CD4-positive, alpha-beta memory T cell (primary cell): ENCODE measurements at regions of chr7 and their contacts with region 1.

Region 1: GRCh38 chr7:28096713-28097112 is 83.9 kb downstream of the JAZF1 start:
- DNase-seq: peak in 4 of 5 donors; percentile 46 to 54 (median 50)
- H3K4me3 ChIP-seq: no peak overlapping the region
- H3K4me3 Mint-ChIP-seq: no peak overlapping the region
- H3K27ac ChIP-seq: no peak overlapping the region
- H3K27ac Mint-ChIP-seq: no peak overlapping the region
- H3K4me1 ChIP-seq: no peaks in the 10 kb centered on the region
- H3K4me1 Mint-ChIP-seq: peaks cover 0 to 10% (median 6%) of the 10 kb centered on the region in 4 donors
- H3K27me3 ChIP-seq: no peaks in the 10 kb centered on the region
- H3K27me3 Mint-ChIP-seq: no peaks in the 10 kb centered on the region

Region 2: DNA sequence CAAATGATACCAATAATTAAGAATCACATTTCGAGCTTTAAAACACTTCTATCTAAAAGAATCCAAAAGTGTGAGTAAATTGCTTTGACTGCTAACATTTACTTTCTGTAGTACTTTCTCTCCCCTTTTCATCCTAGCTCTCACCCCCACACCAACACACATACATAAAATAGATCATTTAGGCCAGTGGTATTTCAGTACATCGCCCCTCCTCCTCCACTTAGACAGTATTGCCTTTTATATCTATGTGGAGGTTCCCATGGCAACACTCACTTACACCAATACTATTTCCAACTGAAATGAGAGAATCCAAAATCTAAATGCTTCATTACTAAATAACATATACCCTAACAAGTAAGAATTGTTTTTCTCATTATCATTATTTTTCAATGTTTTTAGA is 492.9 kb before region 1 on chr7:
- CTCF ChIA-PET with region 1: no interaction called
- POLR2A ChIA-PET with region 1: no interaction called
- intact Hi-C with region 1: no loop called
- DNase-seq: no peak
- H3K4me3 ChIP-seq: no peak overlapping the region
- H3K4me3 Mint-ChIP-seq: no peak overlapping the region
- H3K27ac ChIP-seq: no peak overlapping the region
- H3K27ac Mint-ChIP-seq: peak overlapping the region in 1 of 7 donors; percentile 1
- H3K4me1 ChIP-seq: no peaks in the 10 kb centered on the region
- H3K4me1 Mint-ChIP-seq: peaks cover 0 to 2% (median 0%) of the 10 kb centered on the region in 4 donors
- H3K27me3 ChIP-seq: no peaks in the 10 kb centered on the region
- H3K27me3 Mint-ChIP-seq: no peaks in the 10 kb centered on the region

Region 3: DNA sequence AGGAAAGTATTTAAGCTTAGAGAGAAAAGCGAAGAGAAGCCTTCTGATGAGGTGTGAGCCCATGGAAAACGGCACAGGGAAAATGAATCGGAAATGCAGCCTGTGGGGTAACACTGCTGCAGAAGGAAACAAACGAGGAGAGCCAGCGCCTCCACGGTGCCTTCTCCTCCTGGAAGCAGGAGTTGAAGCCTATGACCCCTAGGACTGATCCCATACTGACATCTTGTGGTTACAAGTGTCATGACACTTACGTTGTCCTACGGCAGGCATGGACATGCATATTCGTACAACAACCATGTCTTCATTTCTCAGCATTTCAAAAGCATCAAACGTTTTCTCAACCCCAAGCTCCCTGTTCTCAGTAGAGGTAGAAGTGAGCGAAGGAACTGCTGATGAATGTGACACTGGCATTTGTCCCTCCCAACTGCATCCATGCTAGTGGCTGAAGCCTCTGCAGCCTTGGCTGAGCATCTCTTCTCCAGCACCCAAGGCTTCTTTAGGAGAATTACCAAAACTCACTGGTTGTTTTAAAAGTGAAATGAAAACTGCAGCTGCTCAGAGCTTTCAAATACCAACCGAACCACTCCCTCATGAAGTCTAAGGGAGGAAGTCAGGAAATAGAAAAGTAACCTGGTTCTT is 76.3 kb before region 1 on chr7:
- CTCF ChIA-PET with region 1: interaction called, 10 read pairs
- POLR2A ChIA-PET with region 1: no interaction called
- intact Hi-C with region 1: no loop called
- DNase-seq: peak in 4 of 5 donors; percentile 44 to 54 (median 50)
- H3K4me3 ChIP-seq: no peak overlapping the region
- H3K4me3 Mint-ChIP-seq: no peak overlapping the region
- H3K27ac ChIP-seq: no peak overlapping the region
- H3K27ac Mint-ChIP-seq: peak overlapping the region in 1 of 7 donors; percentile 12
- H3K4me1 ChIP-seq: peaks cover 9% of the 10 kb centered on the region
- H3K4me1 Mint-ChIP-seq: peaks cover 8 to 12% (median 8%) of the 10 kb centered on the region in 4 donors
- H3K27me3 ChIP-seq: no peaks in the 10 kb centered on the region
- H3K27me3 Mint-ChIP-seq: no peaks in the 10 kb centered on the region

Region 4: GRCh38 chr7:28062197-28062991 is 34.3 kb before region 1 on chr7:
- CTCF ChIA-PET with region 1: interaction called, 18 read pairs
- POLR2A ChIA-PET with region 1: no interaction called
- intact Hi-C with region 1: no loop called
- DNase-seq: peak in 3 of 5 donors; percentile 8 to 35 (median 14)
- H3K4me3 ChIP-seq: no peak overlapping the region
- H3K4me3 Mint-ChIP-seq: no peak overlapping the region
- H3K27ac ChIP-seq: no peak overlapping the region
- H3K27ac Mint-ChIP-seq: peak overlapping the region in 1 of 7 donors; percentile 27
- H3K4me1 ChIP-seq: no peaks in the 10 kb centered on the region
- H3K4me1 Mint-ChIP-seq: peaks cover 0 to 8% (median 7%) of the 10 kb centered on the region in 4 donors
- H3K27me3 ChIP-seq: no peaks in the 10 kb centered on the region
- H3K27me3 Mint-ChIP-seq: no peaks in the 10 kb centered on the region

Region 5: GRCh38 chr7:28078036-28078901 is 18.4 kb before region 1 on chr7:
- CTCF ChIA-PET with region 1: interaction called, 86 read pairs
- POLR2A ChIA-PET with region 1: no interaction called
- intact Hi-C with region 1: no loop called
- DNase-seq: peak in 4 of 5 donors; percentile 37 to 55 (median 43)
- H3K4me3 ChIP-seq: no peak overlapping the region
- H3K4me3 Mint-ChIP-seq: no peak overlapping the region
- H3K27ac ChIP-seq: no peak overlapping the region
- H3K27ac Mint-ChIP-seq: peak overlapping the region in 1 of 7 donors; percentile 55
- H3K4me1 ChIP-seq: no peaks in the 10 kb centered on the region
- H3K4me1 Mint-ChIP-seq: peaks cover 0 to 20% (median 9%) of the 10 kb centered on the region in 4 donors
- H3K27me3 ChIP-seq: no peaks in the 10 kb centered on the region
- H3K27me3 Mint-ChIP-seq: no peaks in the 10 kb centered on the region

Region 6: DNA sequence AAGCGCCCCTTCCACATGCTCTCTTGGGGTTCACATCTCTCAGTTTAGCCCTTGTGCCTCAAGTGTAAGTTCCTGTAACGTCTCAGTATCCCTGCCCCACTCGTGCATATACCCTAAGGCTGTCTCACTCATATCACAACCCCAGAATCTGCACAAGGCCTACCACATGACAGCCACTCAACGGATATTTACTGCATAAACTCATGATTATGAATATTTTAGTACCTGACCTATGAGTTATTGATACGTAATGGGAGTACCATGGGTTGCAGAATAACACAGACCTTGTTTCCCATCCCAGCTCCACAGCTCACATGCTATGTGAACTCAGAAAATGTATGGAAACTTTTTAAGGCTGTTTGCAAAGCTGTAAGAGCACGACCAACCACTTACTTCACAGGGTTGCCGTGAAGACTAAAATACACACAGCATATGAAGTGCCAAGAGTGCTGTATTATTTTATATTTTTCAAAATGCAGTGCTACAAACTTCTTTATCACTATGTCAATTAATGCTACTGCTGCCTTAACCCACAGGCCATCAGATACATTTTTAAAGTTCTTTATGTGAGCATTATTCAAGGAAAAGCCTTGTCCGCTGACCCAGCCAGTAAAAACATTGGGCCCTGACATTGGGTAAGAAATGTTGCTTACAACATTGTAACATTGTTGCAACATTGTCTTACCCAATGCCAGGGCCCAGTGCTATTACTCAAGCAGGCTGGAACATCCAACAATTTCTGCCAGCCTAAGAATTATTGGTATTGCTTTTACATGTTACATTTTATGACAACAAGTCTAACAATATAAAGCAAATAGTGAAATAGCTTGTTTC is 13.3 kb before region 1 on chr7:
- CTCF ChIA-PET with region 1: interaction called, 86 read pairs
- POLR2A ChIA-PET with region 1: no interaction called
- intact Hi-C with region 1: no loop called
- DNase-seq: no peak
- H3K4me3 ChIP-seq: no peak overlapping the region
- H3K4me3 Mint-ChIP-seq: no peak overlapping the region
- H3K27ac ChIP-seq: no peak overlapping the region
- H3K27ac Mint-ChIP-seq: peak overlapping the region in 3 of 7 donors; percentile 8 to 87 (median 59)
- H3K4me1 ChIP-seq: no peaks in the 10 kb centered on the region
- H3K4me1 Mint-ChIP-seq: peaks cover 0 to 14% (median 6%) of the 10 kb centered on the region in 4 donors
- H3K27me3 ChIP-seq: no peaks in the 10 kb centered on the region
- H3K27me3 Mint-ChIP-seq: no peaks in the 10 kb centered on the region

Region 7: GRCh38 chr7:28121496-28121895 is 24.8 kb after region 1 on chr7:
- CTCF ChIA-PET with region 1: interaction called, 16 read pairs
- POLR2A ChIA-PET with region 1: no interaction called
- intact Hi-C with region 1: no loop called
- DNase-seq: no peak
- H3K4me3 ChIP-seq: no peak overlapping the region
- H3K4me3 Mint-ChIP-seq: peak overlapping the region in 2 of 8 donors; percentile 19 to 33
- H3K27ac ChIP-seq: no peak overlapping the region
- H3K27ac Mint-ChIP-seq: peak overlapping the region in 1 of 7 donors; percentile 39
- H3K4me1 ChIP-seq: peaks cover 36% of the 10 kb centered on the region
- H3K4me1 Mint-ChIP-seq: peaks cover 30 to 84% (median 57%) of the 10 kb centered on the region in 4 donors
- H3K27me3 ChIP-seq: no peaks in the 10 kb centered on the region
- H3K27me3 Mint-ChIP-seq: no peaks in the 10 kb centered on the region

Region 8: DNA sequence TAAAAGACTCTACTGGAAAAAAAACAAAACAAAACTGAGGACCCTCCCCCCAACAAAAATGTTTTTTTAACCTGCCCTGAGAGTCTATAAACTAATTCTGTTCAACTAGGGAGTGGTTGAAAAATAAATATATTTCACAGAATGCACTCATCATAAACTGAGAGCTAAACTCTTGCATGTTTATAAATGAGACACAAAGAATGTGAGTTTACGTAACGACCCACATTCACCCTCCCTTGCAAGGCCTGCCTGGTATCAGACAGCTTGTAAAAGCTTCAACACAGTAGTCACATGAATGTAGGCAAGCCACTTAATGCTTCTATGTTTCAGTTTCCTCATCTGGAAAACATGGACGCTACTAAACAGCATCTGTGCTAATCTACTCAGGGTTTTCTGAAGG is 33.6 kb after region 1 on chr7:
- CTCF ChIA-PET with region 1: interaction called, 13 read pairs
- POLR2A ChIA-PET with region 1: no interaction called
- intact Hi-C with region 1: no loop called
- DNase-seq: no peak
- H3K4me3 ChIP-seq: no peak overlapping the region
- H3K4me3 Mint-ChIP-seq: no peak overlapping the region
- H3K27ac ChIP-seq: no peak overlapping the region
- H3K27ac Mint-ChIP-seq: no peak overlapping the region
- H3K4me1 ChIP-seq: peaks cover 3% of the 10 kb centered on the region
- H3K4me1 Mint-ChIP-seq: peaks cover 8 to 45% (median 31%) of the 10 kb centered on the region in 4 donors
- H3K27me3 ChIP-seq: no peaks in the 10 kb centered on the region
- H3K27me3 Mint-ChIP-seq: no peaks in the 10 kb centered on the region

Region 9: GRCh38 chr7:28179120-28180030 is 82.7 kb after region 1 on chr7:
- CTCF ChIA-PET with region 1: no interaction called
- POLR2A ChIA-PET with region 1: no interaction called
- intact Hi-C with region 1: no loop called
- DNase-seq: peak; percentile 70 to 81 (median 75)
- H3K4me3 ChIP-seq: peak overlapping the region; percentile 21 to 56
- H3K4me3 Mint-ChIP-seq: peak overlapping the region; percentile 75 to 90 (median 85)
- H3K27ac ChIP-seq: peak overlapping the region; percentile 1
- H3K27ac Mint-ChIP-seq: peak overlapping the region; percentile 74 to 96 (median 92)
- H3K4me1 ChIP-seq: peaks cover 14% of the 10 kb centered on the region
- H3K4me1 Mint-ChIP-seq: peaks cover 19 to 28% (median 24%) of the 10 kb centered on the region in 4 donors
- H3K27me3 ChIP-seq: no peaks in the 10 kb centered on the region
- H3K27me3 Mint-ChIP-seq: peaks cover 0 to 1% of the 10 kb centered on the region in 2 donors

Region 10: GRCh38 chr7:28536259-28536658 is 439.5 kb after region 1 on chr7:
- CTCF ChIA-PET with region 1: no interaction called
- POLR2A ChIA-PET with region 1: no interaction called
- intact Hi-C with region 1: no loop called
- DNase-seq: no peak
- H3K4me3 ChIP-seq: no peak overlapping the region
- H3K4me3 Mint-ChIP-seq: no peak overlapping the region
- H3K27ac ChIP-seq: no peak overlapping the region
- H3K27ac Mint-ChIP-seq: no peak overlapping the region
- H3K4me1 ChIP-seq: no peaks in the 10 kb centered on the region
- H3K4me1 Mint-ChIP-seq: no peaks in the 10 kb centered on the region
- H3K27me3 ChIP-seq: no peaks in the 10 kb centered on the region
- H3K27me3 Mint-ChIP-seq: peaks cover 1 to 2% of the 10 kb centered on the region in 2 donors